Activated T-helper 1 cell treated with anti-CD3 and anti-CD28 coated beads, Interleukin-12 subunit alpha, Interleukin-12 subunit beta, Interleukin-2, Interleukin-4 antibody, amounts not matched to agents 30 ng/mL and 10 ng/mL and 1 ng/mL, durations not matched to agents 14 hours and 24 hours and 36 hours (primary cell): ENCODE measurements at regions of chr14 and their contacts with region 1.

Region 1: DNA sequence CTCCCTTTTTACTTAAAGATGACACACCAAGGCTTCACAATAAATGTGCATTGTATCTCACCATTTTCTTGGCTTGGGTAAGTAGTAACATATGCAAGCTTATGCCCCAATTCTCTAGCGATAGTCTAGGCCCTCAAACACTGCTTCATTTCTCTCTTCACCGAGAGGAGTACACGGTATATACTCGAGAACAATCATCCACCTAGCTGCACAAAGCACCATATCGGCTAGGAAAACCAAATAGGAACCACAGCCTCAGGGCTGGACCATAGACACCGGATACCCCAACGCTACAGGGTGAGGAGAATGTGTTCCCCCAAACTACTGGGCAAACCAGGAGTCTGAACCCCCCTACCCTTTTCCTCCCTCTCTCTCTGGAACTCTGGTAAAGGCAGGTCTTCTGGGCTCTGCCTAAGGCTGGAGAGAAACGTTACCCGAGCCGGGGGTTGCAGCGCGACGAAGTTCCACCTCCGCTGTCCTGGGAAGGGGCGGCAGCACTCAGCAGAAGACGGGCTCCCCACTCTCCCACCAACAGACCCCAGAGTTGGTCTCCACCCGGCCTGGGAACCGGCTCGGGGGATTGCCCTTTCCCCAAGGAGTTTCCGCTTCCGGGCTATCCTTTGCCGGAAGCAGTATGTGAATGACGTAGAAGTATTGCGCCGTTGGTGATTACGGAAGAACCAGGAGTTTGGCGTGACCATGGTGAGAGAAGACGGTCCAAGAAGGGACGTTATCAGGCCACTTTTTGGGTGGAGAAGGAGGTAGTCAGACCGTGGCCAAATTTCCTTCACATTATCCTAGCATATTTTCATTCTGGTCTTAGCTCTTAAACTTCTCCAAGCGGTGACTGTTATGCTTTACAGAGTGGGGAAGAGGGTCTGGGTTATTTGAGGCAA is at the starts of genes AREL1 and FCF1:
- DNase-seq: peak; percentile 83
- H3K4me3 Mint-ChIP-seq: peak within 1 kb of the TSS; percentile 95
- H3K27ac Mint-ChIP-seq: peak within 1 kb of the TSS; percentile 95
- H3K4me1 Mint-ChIP-seq: peaks cover 49% of the 10 kb centered on the region
- H3K27me3 Mint-ChIP-seq: no peaks in the 10 kb centered on the region
- total RNA-seq, gene AREL1: 45.8 and 50.2 TPM in 2 replicates
- total RNA-seq, gene FCF1: 64.5 and 68.2 TPM in 2 replicates

Region 2: DNA sequence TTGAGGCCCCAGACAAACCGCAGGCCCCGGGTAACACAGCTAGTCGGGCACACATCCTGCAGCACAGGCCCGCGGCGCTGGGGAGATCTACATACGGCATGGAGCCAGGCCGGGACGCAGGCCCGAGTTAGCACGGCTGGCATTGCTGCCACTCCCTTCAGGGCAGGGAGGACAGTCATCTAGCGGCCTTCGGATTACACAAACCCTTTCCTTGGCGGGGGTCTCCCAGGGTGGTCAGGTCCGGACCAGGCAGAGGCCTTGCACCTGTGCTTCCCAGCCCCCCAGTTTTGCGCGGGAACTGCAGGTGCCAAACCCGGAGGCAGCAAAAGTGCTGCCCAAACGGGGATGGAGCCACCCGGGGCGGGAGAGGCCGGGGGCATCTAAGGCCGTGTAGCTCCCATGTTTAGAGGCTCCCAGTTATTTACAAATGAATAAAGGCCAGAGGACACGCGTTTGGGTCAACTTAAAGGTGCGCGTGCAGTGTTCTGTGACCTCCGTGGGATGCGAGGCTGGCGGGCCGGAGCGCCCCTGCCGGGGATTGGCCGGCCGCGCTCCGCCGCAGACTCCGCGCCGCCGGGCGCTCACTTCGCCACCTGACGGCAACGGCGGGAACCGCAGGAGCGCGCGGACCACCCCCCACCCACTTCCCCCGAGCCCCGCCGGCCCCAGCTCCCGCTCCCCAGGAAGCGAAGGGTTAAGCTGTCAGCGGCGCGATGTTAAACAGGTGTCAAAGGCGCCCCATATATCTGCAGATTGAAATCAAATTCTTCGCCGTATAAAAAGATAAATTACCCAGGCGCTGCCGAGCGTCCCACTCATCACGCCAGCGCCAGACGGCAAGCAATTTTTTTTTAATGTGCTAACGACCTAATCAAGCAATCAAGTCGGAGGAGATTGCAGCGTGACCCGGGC is 455.4 kb before region 1 on chr14:
- intact Hi-C with region 1: no loop called
- DNase-seq: peak; percentile 43
- H3K4me3 Mint-ChIP-seq: peak overlapping the region; percentile 84
- H3K27ac Mint-ChIP-seq: peak overlapping the region; percentile 72
- H3K4me1 Mint-ChIP-seq: no peaks in the 10 kb centered on the region
- H3K27me3 Mint-ChIP-seq: peaks cover 26% of the 10 kb centered on the region

Region 3: GRCh38 chr14:74362361-74362915 is 350.3 kb before region 1 on chr14:
- intact Hi-C with region 1: loop called (anchors 1 kb)
- DNase-seq: peak; percentile 34
- H3K4me3 Mint-ChIP-seq: no peak overlapping the region
- H3K27ac Mint-ChIP-seq: no peak overlapping the region
- H3K4me1 Mint-ChIP-seq: no peaks in the 10 kb centered on the region
- H3K27me3 Mint-ChIP-seq: peaks cover 15% of the 10 kb centered on the region

Region 4: GRCh38 chr14:74612350-74613021 is 100.3 kb before region 1 on chr14:
- intact Hi-C with region 1: loop called (anchors 1 kb)
- DNase-seq: peak; percentile 80
- H3K4me3 Mint-ChIP-seq: peak overlapping the region; percentile 73
- H3K27ac Mint-ChIP-seq: no peak overlapping the region
- H3K4me1 Mint-ChIP-seq: peaks cover 48% of the 10 kb centered on the region
- H3K27me3 Mint-ChIP-seq: peaks cover 43% of the 10 kb centered on the region

Region 5: DNA sequence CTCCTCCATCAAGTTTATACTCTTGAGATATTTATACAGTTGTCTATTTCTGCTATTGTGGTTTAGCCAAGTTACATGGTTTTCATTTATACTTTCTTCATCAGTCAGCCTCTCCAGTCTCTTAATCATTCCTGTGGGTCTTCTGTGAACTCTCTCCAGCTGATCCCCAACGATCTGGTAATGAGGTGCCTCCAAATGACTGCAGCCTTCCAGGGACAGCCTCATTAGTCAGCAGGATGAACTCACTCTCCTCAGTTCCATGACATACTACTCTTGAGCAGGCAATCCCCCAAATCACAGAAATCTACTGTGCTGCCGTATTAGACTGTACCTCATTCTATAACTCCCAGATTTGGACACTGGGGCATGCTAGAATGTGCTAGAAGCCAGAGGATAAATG is 15.2 kb before region 1 on chr14:
- intact Hi-C with region 1: no loop called
- DNase-seq: no peak
- H3K4me3 Mint-ChIP-seq: no peak overlapping the region
- H3K27ac Mint-ChIP-seq: no peak overlapping the region
- H3K4me1 Mint-ChIP-seq: peaks cover 7% of the 10 kb centered on the region
- H3K27me3 Mint-ChIP-seq: no peaks in the 10 kb centered on the region

Region 6: DNA sequence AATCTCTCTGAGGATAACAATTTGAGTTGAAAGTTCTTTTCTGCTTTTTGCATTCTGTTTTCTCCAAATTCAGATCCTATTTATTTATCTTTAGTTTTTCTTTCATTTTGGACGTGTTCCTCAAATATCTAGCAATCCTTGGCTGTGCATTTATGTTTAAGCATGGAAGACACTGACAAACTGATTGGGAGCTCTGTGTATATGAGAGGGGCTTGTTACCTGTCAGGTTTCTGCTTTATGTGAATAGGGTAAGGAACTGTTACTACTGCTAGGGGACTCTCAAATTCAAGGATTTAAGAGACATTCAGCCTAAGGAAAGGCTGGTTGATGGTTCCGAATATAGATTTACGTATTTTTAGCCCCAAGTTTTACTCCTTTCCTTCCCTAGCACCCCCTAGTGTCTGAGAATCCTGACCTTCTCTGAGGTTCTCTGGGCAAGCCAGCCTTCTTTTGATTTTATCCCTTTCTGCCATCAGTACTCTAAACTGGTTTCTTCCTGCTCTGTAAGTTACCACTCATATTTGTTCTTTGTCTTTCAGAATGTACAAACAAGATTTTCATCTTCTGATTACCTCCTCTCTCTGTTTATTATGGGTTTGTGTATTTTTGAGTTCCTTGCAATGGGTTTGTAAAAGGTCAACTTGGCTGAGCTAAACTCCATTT is 80.9 kb after region 1 on chr14:
- intact Hi-C with region 1: loop called (anchors 5 kb)
- DNase-seq: no peak
- H3K4me3 Mint-ChIP-seq: peak overlapping the region; percentile 79
- H3K27ac Mint-ChIP-seq: peak overlapping the region; percentile 50
- H3K4me1 Mint-ChIP-seq: peaks cover 52% of the 10 kb centered on the region
- H3K27me3 Mint-ChIP-seq: no peaks in the 10 kb centered on the region

Region 7: GRCh38 chr14:75063407-75064213 is 350.9 kb after region 1 on chr14 and contains the start of gene ACYP1:
- intact Hi-C with region 1: loop called (anchors 10 kb)
- DNase-seq: peak; percentile 89
- H3K4me3 Mint-ChIP-seq: peak within 1 kb of the TSS; percentile 99
- H3K27ac Mint-ChIP-seq: peak within 1 kb of the TSS; percentile 96
- H3K4me1 Mint-ChIP-seq: peaks cover 31% of the 10 kb centered on the region
- H3K27me3 Mint-ChIP-seq: no peaks in the 10 kb centered on the region
- total RNA-seq, gene ACYP1: 37.9 and 43.0 TPM in 2 replicates

Region 8: DNA sequence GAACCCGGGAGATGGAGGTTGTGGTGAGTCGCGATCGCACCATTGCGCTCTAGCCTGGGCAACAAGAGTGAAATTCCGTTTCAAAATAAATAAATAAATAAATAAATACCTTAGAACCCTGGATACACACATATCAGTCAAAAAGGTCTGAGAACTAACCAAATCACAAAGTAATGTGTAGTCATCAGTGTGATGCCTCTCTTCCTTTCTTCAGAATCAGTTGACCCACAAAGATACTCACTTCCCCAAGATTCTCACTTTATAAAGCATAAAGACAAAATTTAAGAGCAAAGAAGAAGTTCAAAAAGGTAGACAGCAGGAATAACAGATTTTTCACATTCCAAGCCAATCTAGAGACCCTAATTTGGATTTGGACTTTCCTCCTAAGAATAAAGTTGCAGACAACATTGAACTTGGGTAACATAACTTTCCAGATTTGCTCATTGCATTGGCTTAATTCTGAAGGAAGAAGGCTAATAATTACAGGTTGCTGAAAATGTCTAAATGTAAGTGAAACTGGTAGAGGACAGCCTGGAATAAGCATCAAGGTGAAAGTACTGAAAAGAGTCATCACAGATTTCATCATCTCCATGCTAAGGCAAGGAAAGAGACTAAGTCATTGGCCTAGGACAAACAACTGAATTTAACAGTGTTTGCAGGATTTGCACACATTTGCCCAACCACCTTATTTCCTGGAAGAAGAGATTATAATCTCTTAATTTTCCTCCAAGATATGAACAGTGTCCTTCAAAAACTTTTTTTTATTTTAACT is 446.3 kb after region 1 on chr14:
- intact Hi-C with region 1: loop called (anchors 5 kb)
- DNase-seq: no peak
- H3K4me3 Mint-ChIP-seq: no peak overlapping the region
- H3K27ac Mint-ChIP-seq: no peak overlapping the region
- H3K4me1 Mint-ChIP-seq: peaks cover 47% of the 10 kb centered on the region
- H3K27me3 Mint-ChIP-seq: no peaks in the 10 kb centered on the region

Region 9: DNA sequence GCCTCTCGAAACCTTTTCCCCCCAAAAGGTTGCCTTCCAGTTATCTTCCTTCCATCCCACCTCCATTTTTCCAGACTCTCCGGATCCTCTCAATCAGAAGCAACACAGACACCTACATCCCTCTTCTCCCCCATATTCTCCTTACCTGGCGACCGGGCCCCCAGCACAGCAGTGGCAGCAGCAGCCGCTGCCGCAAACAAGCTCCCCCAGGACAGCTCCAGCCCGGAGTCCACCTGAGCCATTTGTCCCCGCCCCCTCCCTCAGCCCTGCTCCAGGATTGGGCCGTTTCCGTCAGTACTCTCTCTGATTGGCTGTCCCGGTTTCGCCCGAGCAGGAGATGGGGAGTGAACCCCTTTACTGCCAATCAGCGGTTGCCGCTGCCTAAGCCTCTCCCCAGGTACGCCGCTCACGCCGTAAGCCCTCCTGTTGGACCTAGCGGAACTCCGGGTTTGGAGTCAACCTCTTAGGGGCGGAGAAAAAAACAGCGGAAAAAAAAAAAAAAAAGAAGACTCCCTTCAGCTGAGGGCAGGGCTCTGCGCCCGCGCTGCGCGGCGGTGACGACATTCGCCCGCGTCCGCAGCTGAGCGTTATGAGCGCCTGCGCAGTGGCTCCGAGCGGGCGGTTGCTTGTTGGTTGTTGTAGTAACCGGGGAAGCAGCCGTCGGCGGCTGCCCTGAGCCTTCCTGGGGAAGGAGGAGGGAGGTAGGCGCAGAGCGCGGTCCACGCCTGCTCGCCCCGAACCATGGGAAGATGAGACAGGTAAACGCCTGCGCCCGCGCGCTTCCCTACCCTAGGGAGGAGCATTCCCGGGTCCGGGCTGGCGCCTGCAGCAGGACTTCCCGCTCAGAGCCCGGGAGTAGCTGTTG is 948.1 kb after region 1 on chr14 and contains the starts of genes ERG28 and TTLL5:
- intact Hi-C with region 1: loop called (anchors 2 kb)
- DNase-seq: peak; percentile 97
- H3K4me3 Mint-ChIP-seq: peak within 1 kb of the TSS; percentile 100
- H3K27ac Mint-ChIP-seq: peak within 1 kb of the TSS; percentile 94
- H3K4me1 Mint-ChIP-seq: peaks cover 38% of the 10 kb centered on the region
- H3K27me3 Mint-ChIP-seq: no peaks in the 10 kb centered on the region
- total RNA-seq, gene ERG28: 17.5 and 17.8 TPM in 2 replicates
- total RNA-seq, gene TTLL5: 36.2 and 39.0 TPM in 2 replicates